Caco-2 (cell line): ENCODE measurements at regions of chr6 and their contacts with region 1.

Region 1: DNA sequence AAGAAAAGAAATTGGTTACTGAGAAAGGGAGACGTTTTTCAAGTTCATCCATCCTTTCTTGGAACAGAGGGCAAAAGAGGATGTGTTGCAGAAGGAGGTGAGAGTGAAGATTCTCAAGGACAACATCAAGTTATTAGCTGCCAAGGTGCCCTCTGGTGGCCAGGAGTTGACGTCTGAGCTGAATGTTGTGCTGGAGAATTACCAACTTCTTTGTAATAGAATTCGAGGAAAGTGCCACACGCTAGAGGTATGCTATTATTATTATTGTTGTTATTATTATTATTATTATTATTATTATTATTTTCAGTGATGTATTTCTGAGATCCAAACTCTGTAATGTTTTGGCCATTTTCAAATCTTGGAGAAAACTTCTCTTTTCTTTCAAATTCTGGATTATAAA is 197.0 kb downstream of the UTRN start:
- DNase-seq: peak; percentile 66 to 73
- H3K4me3 ChIP-seq: no peak overlapping the region
- H3K4me3 Mint-ChIP-seq: no peak overlapping the region
- H3K27ac Mint-ChIP-seq: no peak overlapping the region
- H3K4me1 ChIP-seq: no peaks in the 10 kb centered on the region
- H3K4me1 Mint-ChIP-seq: no peaks in the 10 kb centered on the region
- H3K27me3 ChIP-seq: no peaks in the 10 kb centered on the region
- H3K27me3 Mint-ChIP-seq: no peaks in the 10 kb centered on the region
- CTCF ChIP-seq: peak; percentile 58 to 77

Region 2: DNA sequence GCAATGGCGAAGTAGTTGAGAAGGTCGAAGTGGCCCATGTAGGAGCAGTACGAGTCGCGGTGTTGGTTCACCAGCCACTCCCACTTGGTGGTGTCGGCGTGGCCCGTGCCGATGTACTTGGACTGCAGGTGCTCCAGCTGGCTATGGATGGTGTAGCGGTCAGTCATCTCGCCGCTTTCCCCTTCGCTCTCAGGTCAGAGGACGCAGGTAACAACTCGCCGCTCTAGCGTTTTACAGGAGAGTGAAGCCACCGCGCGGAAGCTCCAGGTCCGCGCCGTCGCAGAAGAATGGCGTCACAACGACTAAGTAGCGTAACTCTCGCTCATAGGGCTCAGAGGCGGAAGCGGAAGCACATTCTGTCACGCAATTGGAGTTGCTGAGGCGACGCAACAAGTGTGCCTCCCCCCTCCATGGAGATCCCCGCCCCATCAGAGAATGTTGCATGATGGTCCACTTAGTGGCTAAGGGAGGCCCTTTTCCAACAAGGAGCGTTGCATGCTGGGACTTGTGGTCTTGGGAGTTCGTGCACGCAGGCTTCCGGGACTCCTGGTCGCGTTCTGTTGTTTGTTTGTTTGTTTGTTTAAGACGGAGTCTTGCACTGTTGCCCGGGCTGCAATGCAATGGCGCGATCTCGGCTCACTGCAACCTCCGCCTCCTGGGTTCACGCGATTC is 386.7 kb before region 1 on chr6 and contains the start of gene SF3B5:
- CTCF ChIA-PET with region 1: no interaction called
- POLR2A ChIA-PET with region 1: no interaction called
- intact Hi-C with region 1: loop called (anchors 5 kb)
- DNase-seq: peak; percentile 97 to 99
- H3K4me3 ChIP-seq: peak within 1 kb of the TSS; percentile 74
- H3K4me3 Mint-ChIP-seq: peak within 1 kb of the TSS; percentile 87
- H3K27ac Mint-ChIP-seq: peak within 1 kb of the TSS; percentile 94
- H3K4me1 ChIP-seq: peaks cover 4% of the 10 kb centered on the region; the same call in 1 of the 2 replicates
- H3K4me1 Mint-ChIP-seq: peaks cover 9% of the 10 kb centered on the region
- H3K27me3 ChIP-seq: no peaks in the 10 kb centered on the region
- H3K27me3 Mint-ChIP-seq: no peaks in the 10 kb centered on the region
- CTCF ChIP-seq: no peak
- total RNA-seq, gene SF3B5: 84.6 and 95.4 TPM in 2 replicates

Region 3: GRCh38 chr6:144104898-144105487 is 377.1 kb before region 1 on chr6:
- CTCF ChIA-PET with region 1: interaction called, 10 read pairs
- POLR2A ChIA-PET with region 1: no interaction called
- intact Hi-C with region 1: loop called (anchors 1 kb)
- DNase-seq: peak in 1 of 2 experiments; percentile 67
- H3K4me3 ChIP-seq: no peak overlapping the region
- H3K4me3 Mint-ChIP-seq: no peak overlapping the region
- H3K27ac Mint-ChIP-seq: no peak overlapping the region
- H3K4me1 ChIP-seq: no peaks in the 10 kb centered on the region
- H3K4me1 Mint-ChIP-seq: peaks cover 16% of the 10 kb centered on the region
- H3K27me3 ChIP-seq: no peaks in the 10 kb centered on the region
- H3K27me3 Mint-ChIP-seq: no peaks in the 10 kb centered on the region
- CTCF ChIP-seq: peak; percentile 55 to 81

Region 4: GRCh38 chr6:144460327-144461095 is 21.6 kb before region 1 on chr6:
- CTCF ChIA-PET with region 1: interaction called, 3 read pairs
- POLR2A ChIA-PET with region 1: no interaction called
- intact Hi-C with region 1: loop called (anchors 2 kb)
- DNase-seq: no peak
- H3K4me3 ChIP-seq: no peak overlapping the region
- H3K4me3 Mint-ChIP-seq: no peak overlapping the region
- H3K27ac Mint-ChIP-seq: no peak overlapping the region
- H3K4me1 ChIP-seq: no peaks in the 10 kb centered on the region
- H3K4me1 Mint-ChIP-seq: peaks cover 7% of the 10 kb centered on the region
- H3K27me3 ChIP-seq: no peaks in the 10 kb centered on the region
- H3K27me3 Mint-ChIP-seq: no peaks in the 10 kb centered on the region
- CTCF ChIP-seq: no peak

Region 5: GRCh38 chr6:144469144-144469575 is 13.0 kb before region 1 on chr6:
- CTCF ChIA-PET with region 1: interaction called, 3 read pairs
- POLR2A ChIA-PET with region 1: no interaction called
- intact Hi-C with region 1: loop called (anchors 1 kb)
- DNase-seq: no peak
- H3K4me3 ChIP-seq: no peak overlapping the region
- H3K4me3 Mint-ChIP-seq: no peak overlapping the region
- H3K27ac Mint-ChIP-seq: peak overlapping the region; percentile 59
- H3K4me1 ChIP-seq: peaks cover 35% of the 10 kb centered on the region
- H3K4me1 Mint-ChIP-seq: peaks cover 20% of the 10 kb centered on the region
- H3K27me3 ChIP-seq: no peaks in the 10 kb centered on the region
- H3K27me3 Mint-ChIP-seq: no peaks in the 10 kb centered on the region
- CTCF ChIP-seq: no peak

Region 6: DNA sequence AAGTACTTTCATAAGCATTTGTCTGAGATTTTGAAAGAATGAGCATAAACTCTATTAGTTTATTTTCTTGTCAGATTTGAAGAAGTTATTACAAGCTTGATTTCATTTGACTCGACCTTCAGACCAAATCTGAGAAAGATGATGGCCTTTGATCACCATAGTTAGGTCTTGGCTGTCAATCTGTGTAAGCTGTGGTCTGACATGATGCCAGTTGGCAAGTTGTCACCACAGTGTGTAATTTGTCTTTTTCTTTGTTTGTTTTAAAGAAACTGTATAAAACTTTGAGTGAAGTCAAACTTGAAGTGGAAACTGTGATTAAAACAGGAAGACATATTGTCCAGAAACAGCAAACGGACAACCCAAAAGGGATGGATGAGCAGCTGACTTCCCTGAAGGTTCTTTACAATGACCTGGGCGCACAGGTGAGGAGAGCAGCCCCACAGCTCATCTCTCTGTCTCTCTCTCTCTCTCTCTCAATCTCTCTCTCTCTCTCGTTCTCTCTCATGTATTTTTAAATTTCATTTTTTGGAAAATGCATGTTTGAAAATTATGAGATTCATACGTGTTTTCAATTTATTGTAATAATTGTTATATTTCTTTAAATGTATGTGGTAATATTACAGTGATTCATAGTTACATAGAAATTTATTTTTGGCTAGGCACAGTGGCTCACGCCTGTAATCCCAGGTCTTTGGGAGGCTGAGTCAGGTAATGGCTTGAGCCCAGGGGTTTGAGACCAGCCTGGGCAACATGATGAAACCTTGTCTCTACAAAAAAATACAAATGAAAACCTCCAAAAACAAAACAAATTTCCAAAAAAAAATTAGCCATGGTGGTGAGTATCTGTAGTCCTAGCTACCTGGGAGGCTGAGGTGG is 11.1 kb after region 1 on chr6:
- CTCF ChIA-PET with region 1: no interaction called
- POLR2A ChIA-PET with region 1: no interaction called
- intact Hi-C with region 1: no loop called
- DNase-seq: no peak
- H3K4me3 ChIP-seq: no peak overlapping the region
- H3K4me3 Mint-ChIP-seq: no peak overlapping the region
- H3K27ac Mint-ChIP-seq: no peak overlapping the region
- H3K4me1 ChIP-seq: no peaks in the 10 kb centered on the region
- H3K4me1 Mint-ChIP-seq: no peaks in the 10 kb centered on the region
- H3K27me3 ChIP-seq: no peaks in the 10 kb centered on the region
- H3K27me3 Mint-ChIP-seq: no peaks in the 10 kb centered on the region
- CTCF ChIP-seq: no peak

Region 7: DNA sequence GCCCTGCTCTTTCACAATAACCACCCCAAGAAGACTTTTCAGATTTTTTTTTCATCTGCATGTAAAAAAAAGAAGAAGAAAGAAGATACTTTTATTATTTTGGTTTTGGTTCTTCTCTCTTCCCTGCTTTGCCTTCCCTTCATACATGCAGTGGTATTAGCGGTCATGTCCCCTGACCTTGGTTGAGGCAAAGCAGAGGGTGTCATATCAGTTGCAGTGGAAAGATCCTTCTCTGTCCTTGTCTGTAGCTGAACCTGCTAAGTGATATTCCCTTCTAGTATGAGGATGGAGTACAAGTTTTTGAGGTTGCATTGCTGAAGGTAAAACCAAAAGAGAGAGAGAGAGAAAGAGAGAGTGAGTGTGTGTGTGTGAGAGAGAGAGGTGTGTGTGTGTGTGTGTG is 148.7 kb after region 1 on chr6:
- CTCF ChIA-PET with region 1: no interaction called
- POLR2A ChIA-PET with region 1: no interaction called
- intact Hi-C with region 1: no loop called
- DNase-seq: no peak
- H3K4me3 ChIP-seq: no peak overlapping the region
- H3K4me3 Mint-ChIP-seq: no peak overlapping the region
- H3K27ac Mint-ChIP-seq: no peak overlapping the region
- H3K4me1 ChIP-seq: peaks cover 6% of the 10 kb centered on the region; the same call in 1 of the 2 replicates
- H3K4me1 Mint-ChIP-seq: peaks cover 5% of the 10 kb centered on the region
- H3K27me3 ChIP-seq: no peaks in the 10 kb centered on the region
- H3K27me3 Mint-ChIP-seq: no peaks in the 10 kb centered on the region
- CTCF ChIP-seq: no peak